PC-3 (cell line): ENCODE measurements at regions of chr14 and their contacts with region 1.

Region 1: GRCh38 chr14:65588426-65589140 is 176.1 kb downstream of the FUT8 start:
- DNase-seq: peak; percentile 29
- ATAC-seq: peak; percentile 64
- H3K4me3 ChIP-seq: no peak overlapping the region
- H3K27ac ChIP-seq: no peak overlapping the region
- H3K4me1 ChIP-seq: peaks cover 27% of the 10 kb centered on the region
- H3K27me3 ChIP-seq: no peaks in the 10 kb centered on the region
- CTCF ChIP-seq: peak; percentile 21; the same call in 1 of the 2 replicates

Region 2: DNA sequence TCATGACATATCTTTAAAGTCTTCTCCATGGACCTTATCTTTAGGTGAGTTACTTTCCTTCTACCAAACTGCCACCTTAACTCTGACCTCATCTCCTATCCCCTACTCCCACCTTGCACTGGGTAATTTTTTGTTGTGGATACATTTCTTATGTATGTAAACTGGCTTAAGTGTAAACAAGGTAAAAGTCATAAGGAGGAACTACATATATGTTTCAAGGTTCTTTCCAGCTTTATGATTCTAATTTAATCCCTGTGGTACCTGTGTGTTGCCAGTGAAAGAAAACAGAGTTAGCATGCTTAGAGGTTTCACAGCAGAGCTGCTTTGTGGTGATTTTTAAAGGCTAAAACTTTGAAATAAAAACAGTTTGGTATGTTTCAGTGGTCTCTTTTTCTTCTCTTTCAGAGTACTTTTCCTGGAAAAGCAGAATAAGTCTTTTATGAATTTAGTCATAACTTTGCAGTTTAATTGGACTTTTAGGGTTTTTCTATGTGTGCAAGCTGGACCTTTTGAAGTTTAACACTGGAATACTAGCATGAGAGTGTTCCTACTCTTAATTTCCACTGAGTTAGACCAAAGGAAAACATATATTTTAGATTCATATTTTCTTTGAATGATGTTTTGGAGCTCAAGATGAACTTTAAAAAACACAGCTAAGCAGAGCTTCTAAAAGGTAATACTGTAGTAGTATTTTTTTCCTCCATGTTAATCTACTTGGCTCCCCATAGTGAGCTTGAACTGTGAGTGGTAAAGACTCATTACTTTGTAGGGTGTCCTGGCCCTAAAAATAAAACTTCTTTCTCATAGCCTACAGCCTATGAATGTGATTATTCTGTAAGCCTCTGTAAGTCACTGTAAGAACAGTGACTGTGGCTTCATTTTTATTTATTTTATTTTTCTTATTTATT is 70.7 kb before region 1 on chr14:
- CTCF ChIA-PET with region 1: no interaction called
- POLR2A ChIA-PET with region 1: no interaction called
- intact Hi-C with region 1: loop called (anchors 5 kb)
- DNase-seq: no peak
- ATAC-seq: no peak
- H3K4me3 ChIP-seq: no peak overlapping the region
- H3K27ac ChIP-seq: no peak overlapping the region
- H3K4me1 ChIP-seq: no peaks in the 10 kb centered on the region
- H3K27me3 ChIP-seq: no peaks in the 10 kb centered on the region
- CTCF ChIP-seq: no peak